Prostate gland (tissue), 2 donors: ENCODE measurements at regions of chr2 and their contacts with region 1.

Region 1: GRCh38 chr2:159201360-159202063 is 85.0 kb downstream of the WDSUB1 start:
- DNase-seq: no peak
- H3K4me3 ChIP-seq: no peak overlapping the region
- H3K27ac ChIP-seq: no peak overlapping the region
- H3K4me1 ChIP-seq: no peaks in the 10 kb centered on the region
- H3K27me3 ChIP-seq: no peaks in the 10 kb centered on the region
- CTCF ChIP-seq: no peak
- POLR2A ChIP-seq: no peak

Region 2: DNA sequence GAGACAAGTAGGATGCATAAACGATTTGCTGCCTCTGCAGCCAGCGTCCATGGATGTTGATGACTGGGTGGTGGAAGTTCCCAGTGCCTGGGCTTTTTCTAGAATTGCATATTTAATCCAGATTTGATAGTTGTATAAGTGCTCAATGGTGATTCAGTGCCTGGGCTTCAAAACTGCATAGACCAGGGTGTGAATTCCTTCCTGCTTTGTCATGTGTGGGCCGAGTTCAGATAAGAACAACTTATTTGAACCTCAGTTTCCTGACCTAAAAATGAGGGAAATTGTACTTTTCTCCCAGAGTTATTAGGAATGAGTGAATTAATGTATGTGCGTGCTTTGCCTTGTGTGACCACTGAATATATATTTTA is 69.6 kb before region 1 on chr2:
- intact Hi-C with region 1: loop called (anchors 10 kb)
- DNase-seq: no peak
- H3K4me3 ChIP-seq: no peak overlapping the region
- H3K27ac ChIP-seq: no peak overlapping the region
- H3K4me1 ChIP-seq: no peaks in the 10 kb centered on the region
- H3K27me3 ChIP-seq: no peaks in the 10 kb centered on the region
- CTCF ChIP-seq: no peak
- POLR2A ChIP-seq: no peak

Region 3: DNA sequence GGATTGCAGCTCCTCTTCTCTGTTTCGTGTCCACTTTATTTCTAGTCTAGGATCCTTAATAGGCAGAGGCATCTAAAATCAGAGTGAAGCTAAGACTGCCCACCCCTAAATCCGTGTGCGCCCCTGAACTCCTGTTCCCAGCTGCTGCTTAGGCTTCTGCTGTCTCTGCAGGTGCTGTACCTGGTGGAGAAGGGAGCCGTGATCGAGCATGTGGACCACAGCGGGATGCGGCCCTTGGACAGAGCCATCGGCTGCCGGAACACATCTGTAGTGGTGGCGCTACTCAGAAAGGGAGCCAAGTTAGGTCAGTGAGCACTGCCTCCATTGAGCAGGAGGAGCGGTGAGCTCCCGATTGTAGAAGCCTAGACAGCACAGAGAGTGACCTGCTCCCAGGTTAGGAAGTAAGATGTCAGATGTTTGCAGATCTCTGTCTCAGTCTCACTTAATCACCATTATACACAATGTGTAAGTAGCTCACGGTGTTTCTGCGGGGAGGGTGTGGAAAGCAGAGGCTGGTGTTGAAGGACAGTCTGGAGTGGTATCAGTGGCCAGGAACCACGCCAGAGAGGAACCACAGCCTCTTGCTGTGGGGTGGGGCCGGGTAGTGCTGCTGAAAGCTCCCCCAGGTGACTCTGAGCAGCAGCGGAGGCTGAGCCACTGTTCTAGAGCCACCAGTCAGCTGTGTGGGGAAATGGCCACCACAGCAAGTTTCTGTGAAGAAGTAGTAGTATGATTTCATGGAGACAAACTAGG is 22.7 kb after region 1 on chr2:
- intact Hi-C with region 1: no loop called
- DNase-seq: no peak
- H3K4me3 ChIP-seq: no peak overlapping the region
- H3K27ac ChIP-seq: no peak overlapping the region
- H3K4me1 ChIP-seq: no peaks in the 10 kb centered on the region
- H3K27me3 ChIP-seq: no peaks in the 10 kb centered on the region
- CTCF ChIP-seq: no peak
- POLR2A ChIP-seq: no peak

Region 4: GRCh38 chr2:159249984-159250715 is 48.6 kb after region 1 on chr2:
- intact Hi-C with region 1: no loop called
- DNase-seq: peak; percentile 92
- H3K4me3 ChIP-seq: no peak overlapping the region
- H3K27ac ChIP-seq: peak overlapping the region; percentile 64 to 74
- H3K4me1 ChIP-seq: no peaks in the 10 kb centered on the region
- H3K27me3 ChIP-seq: no peaks in the 10 kb centered on the region
- CTCF ChIP-seq: no peak
- POLR2A ChIP-seq: no peak

Region 5: DNA sequence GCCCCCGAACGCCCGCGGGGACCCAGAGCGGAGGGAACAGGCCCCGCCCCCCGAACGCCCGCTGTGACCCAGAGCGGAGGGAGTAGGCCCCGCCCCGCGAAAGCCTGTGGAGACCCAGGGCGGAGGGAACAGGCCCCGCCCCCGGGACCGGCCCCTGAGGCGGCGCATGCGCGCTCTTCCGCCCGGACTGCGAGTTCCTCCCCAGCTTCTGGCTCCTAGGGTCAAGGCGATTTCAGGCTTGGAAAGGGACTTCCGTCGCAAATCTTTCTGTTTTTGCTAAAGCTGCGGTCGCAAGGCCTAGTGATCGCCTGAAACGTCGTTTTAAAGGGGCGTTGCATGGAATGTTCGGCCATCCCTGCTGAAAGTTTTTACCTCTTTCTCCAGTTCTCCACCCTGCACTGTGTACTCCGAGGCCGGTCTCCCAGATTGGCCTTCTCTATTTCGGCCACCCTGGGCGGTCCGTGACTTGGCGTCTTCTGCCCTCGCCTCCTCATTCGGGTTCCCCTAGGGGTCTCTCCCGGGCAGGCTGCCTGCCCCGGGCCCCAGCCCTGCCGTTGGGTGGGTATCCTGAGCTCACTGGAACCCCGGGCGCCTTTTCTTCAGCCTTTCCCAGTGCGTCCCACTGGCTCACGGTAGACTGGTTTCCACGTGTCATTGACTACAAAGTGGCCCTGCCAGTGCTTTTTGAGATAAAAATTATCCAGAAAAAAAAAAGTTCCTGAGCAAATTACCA is 85.4 kb after region 1 on chr2:
- intact Hi-C with region 1: loop called (anchors 2 kb)
- DNase-seq: peak; percentile 99
- H3K4me3 ChIP-seq: peak overlapping the region; percentile 91 to 98
- H3K27ac ChIP-seq: peak overlapping the region; percentile 94 to 95
- H3K4me1 ChIP-seq: no peaks in the 10 kb centered on the region
- H3K27me3 ChIP-seq: no peaks in the 10 kb centered on the region
- CTCF ChIP-seq: no peak
- POLR2A ChIP-seq: peak; percentile 70

Region 6: DNA sequence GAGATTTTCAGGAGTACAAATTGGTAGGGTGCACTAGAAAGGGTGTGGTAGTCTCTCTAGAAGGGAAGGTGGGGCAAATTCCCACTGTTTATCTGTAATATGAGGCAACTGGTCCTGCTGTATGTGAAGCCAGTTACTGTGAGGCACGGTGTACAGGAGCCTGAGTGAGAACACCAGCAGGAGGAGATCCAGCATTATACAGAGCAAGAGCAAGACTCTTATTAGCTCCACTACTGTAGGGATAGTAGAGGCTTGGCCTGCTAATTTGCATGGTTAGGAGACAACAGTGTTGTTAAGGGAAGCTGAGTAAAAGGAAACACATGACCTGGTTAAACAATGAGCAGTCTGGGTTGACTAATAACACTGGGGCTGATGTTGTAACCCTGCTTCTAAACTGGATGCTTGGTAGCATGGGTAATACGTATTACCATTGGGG is 161.3 kb after region 1 on chr2:
- intact Hi-C with region 1: no loop called
- DNase-seq: no peak
- H3K4me3 ChIP-seq: no peak overlapping the region
- H3K27ac ChIP-seq: no peak overlapping the region
- H3K4me1 ChIP-seq: no peaks in the 10 kb centered on the region
- H3K27me3 ChIP-seq: no peaks in the 10 kb centered on the region
- CTCF ChIP-seq: no peak
- POLR2A ChIP-seq: no peak